B cell (primary cell): ENCODE measurements at regions of chr6 and their contacts with region 1.

Region 1: DNA sequence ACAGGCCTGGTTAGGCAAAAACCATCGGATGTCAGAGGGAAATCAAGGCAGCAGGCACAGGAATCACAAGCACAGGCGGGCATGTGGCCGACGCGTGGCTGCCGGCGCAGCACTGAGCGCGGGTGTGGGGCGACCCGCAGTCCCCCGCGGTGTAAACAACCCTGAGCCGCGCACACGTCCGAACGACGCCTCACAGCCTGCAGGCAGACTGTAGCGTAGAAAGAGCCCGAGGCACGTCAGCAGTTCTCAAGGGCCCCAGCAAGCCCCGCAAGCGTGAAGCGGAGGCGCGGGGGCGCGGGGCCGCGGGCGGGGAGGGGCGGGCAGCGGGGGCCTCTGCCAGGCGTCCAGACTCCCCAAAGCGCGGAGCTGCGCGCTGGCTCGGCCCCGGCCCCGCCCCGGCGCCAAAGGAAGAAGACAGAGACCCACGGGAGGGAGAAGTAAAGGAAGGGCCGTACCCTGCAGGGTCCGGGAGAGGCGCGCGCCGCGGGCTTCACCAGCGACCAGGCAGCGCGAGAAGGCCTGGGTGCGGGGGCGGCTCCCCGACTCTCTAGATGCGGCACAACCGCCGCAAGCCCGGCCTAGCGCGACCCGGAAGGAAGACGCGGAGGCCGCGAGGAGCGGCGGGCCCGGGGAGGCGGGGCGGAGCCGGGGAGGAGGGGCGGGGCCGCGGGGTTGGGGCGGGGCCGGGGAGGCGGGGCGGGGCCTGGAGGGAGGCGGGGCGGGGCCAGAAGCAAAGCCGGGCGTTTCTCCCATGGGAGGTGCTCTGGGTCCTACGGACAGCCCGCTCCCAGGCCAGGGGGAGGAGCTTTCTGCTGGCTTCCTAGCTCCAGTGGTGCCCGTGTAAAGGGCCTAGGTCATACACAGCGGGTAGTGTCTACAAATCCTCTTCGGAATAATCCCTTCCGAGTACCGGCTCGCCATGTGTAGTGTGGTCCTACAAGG is at the start of gene FBXL4:
- DNase-seq: peak; percentile 88
- ATAC-seq: peak; percentile 83
- H3K4me3 ChIP-seq: peak within 1 kb of the TSS; percentile 72 to 93 (median 76)
- H3K4me3 Mint-ChIP-seq: peak within 1 kb of the TSS; percentile 91
- H3K27ac ChIP-seq: peak within 1 kb of the TSS; percentile 71 to 79
- H3K27ac Mint-ChIP-seq: peak within 1 kb of the TSS; percentile 93
- H3K4me1 ChIP-seq: peaks cover 26 to 27% of the 10 kb centered on the region in 2 donors
- H3K4me1 Mint-ChIP-seq: peaks cover 30% of the 10 kb centered on the region
- H3K27me3 ChIP-seq: no peaks in the 10 kb centered on the region
- H3K27me3 Mint-ChIP-seq: peaks cover 3% of the 10 kb centered on the region
- CTCF ChIP-seq: no peak
- total RNA-seq, gene FBXL4: 22.0 and 22.5 TPM in 2 replicates

Region 2: DNA sequence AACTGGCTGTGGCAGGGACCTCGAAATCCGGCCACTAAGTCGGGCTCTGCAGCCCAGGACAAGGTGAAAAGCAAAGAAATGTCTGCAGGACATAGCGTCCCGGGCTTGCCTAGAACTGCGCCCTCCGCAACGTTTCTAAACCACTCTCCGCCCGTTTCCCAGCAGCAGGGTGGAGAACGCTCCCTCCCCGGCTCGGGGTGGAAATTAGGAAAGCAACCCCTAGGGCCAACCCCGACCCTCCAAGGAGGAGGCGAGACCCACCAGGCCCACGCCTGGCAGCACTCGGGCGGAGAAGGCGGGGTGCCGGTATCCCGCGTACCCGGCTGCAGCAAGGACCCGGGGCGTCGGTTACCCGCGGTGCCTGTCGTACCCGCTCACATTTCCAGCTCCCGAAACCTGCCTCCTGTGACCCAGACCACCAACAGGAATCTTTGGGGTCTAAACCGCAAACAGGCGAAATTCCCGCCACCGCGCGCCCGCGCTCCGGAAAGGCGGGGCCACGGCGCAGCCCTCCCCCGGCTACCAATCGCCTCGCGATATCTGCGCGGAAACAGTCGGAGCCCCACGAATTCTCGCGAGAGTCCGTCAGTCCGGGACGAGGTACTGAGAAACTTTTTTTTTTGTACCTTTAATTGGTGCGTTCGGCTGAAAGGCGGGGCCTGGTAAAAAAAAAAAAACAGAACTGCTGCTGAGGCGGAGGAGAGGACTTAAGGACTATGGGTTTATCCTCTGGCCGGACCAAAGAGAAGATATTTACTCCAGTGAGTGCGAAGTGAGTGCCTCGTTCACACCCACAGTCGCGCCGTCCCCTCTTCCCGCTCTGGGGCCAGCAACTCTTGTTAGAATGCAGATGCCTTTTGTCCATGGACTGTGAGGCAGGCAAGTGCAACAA is 1664.7 kb before region 1 on chr6 and contains the start of gene MMS22L:
- CTCF ChIA-PET with region 1: no interaction called
- POLR2A ChIA-PET with region 1: no interaction called
- intact Hi-C with region 1: loop called (anchors 5 kb)
- DNase-seq: peak; percentile 95
- ATAC-seq: peak; percentile 98
- H3K4me3 ChIP-seq: peak within 1 kb of the TSS; percentile 68 to 93 (median 88)
- H3K4me3 Mint-ChIP-seq: peak within 1 kb of the TSS; percentile 97
- H3K27ac ChIP-seq: peak within 1 kb of the TSS; percentile 40 to 44
- H3K27ac Mint-ChIP-seq: peak within 1 kb of the TSS; percentile 91
- H3K4me1 ChIP-seq: peaks cover 9 to 10% of the 10 kb centered on the region in 2 donors
- H3K4me1 Mint-ChIP-seq: peaks cover 21% of the 10 kb centered on the region
- H3K27me3 ChIP-seq: no peaks in the 10 kb centered on the region
- H3K27me3 Mint-ChIP-seq: no peaks in the 10 kb centered on the region
- CTCF ChIP-seq: no peak
- total RNA-seq, gene MMS22L: 20.5 and 23.5 TPM in 2 replicates

Region 3: DNA sequence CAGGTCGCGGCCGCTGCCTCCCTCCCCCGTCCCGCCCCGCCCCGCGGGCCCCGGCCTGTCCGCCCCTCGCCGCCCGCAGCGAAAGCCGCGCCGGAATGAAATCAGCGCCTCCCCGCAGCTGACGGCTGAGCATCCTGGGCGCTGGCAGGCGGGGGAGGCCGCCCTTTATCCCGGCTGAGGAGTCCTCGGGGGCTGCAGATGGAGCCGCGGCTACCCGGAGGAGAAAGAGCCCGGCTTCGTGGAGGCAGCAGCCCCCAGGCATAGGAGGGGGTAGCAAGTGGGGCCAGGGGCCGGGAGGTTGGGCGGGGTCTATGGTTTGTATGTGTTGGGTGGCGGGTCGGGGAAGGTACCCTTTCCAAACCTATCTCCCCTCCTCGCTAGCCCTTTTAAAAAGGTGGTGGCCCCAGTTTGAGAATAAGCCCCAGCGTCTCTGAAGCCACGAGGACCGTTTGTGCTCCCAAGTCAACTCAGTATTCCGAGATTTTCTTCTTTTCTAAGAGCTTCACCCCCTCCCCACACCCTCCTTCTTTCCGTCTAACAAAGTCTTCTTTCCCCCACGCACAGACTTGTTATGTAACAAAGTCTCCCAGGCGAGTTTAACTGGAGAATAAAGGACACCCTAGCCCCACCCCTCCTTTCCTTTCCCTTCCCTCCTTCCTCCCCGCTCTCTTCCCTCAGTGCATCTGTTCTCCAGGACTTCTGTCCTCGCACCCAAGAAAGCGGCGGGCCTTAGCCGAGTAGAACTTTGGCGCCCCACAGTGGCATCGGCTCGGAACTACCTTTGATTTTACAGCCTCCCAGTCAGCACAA is 102.2 kb before region 1 on chr6:
- CTCF ChIA-PET with region 1: no interaction called
- POLR2A ChIA-PET with region 1: no interaction called
- intact Hi-C with region 1: loop called (anchors 5 kb)
- DNase-seq: peak; percentile 78
- ATAC-seq: peak; percentile 72
- H3K4me3 ChIP-seq: peak overlapping the region in 3 of 5 experiments; percentile 9 to 27 (median 24)
- H3K4me3 Mint-ChIP-seq: peak overlapping the region; percentile 78
- H3K27ac ChIP-seq: no peak overlapping the region
- H3K27ac Mint-ChIP-seq: no peak overlapping the region
- H3K4me1 ChIP-seq: peaks cover 39 to 57% of the 10 kb centered on the region in 2 donors
- H3K4me1 Mint-ChIP-seq: peaks cover 33% of the 10 kb centered on the region
- H3K27me3 ChIP-seq: peaks cover 0 to 87% (median 76%) of the 10 kb centered on the region in 4 experiments
- H3K27me3 Mint-ChIP-seq: peaks cover 73% of the 10 kb centered on the region
- CTCF ChIP-seq: peak; percentile 89

Region 4: DNA sequence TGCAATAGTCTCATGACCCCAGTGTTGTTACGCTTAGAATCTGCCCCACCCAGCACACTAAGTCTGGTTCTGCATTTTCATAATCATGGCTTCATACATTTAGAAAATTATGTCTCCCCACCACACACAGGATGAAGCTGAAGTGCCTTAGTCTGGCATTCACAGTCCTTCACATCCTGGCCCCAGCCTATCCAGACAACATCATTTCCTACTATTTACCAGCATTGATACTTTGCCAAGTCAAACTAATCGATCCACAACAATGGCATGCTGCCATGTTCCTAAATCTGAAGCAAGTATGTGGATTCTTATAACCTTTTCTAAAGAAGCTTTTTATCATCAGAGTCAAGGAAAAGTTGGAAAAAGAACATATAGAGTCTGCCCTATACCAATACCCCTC is 132.6 kb after region 1 on chr6:
- CTCF ChIA-PET with region 1: no interaction called
- POLR2A ChIA-PET with region 1: no interaction called
- intact Hi-C with region 1: no loop called
- DNase-seq: no peak
- ATAC-seq: no peak
- H3K4me3 ChIP-seq: no peak overlapping the region
- H3K4me3 Mint-ChIP-seq: no peak overlapping the region
- H3K27ac ChIP-seq: no peak overlapping the region
- H3K27ac Mint-ChIP-seq: no peak overlapping the region
- H3K4me1 ChIP-seq: no peaks in the 10 kb centered on the region
- H3K4me1 Mint-ChIP-seq: no peaks in the 10 kb centered on the region
- H3K27me3 ChIP-seq: peaks cover 0 to 5% (median 0%) of the 10 kb centered on the region in 4 experiments
- H3K27me3 Mint-ChIP-seq: peaks cover 13% of the 10 kb centered on the region
- CTCF ChIP-seq: no peak

Region 5: GRCh38 chr6:99425647-99426453 is 478.2 kb after region 1 on chr6:
- CTCF ChIA-PET with region 1: no interaction called
- POLR2A ChIA-PET with region 1: no interaction called
- intact Hi-C with region 1: loop called (anchors 5 kb)
- DNase-seq: no peak
- ATAC-seq: peak; percentile 50
- H3K4me3 ChIP-seq: peak overlapping the region; percentile 75 to 100 (median 99)
- H3K4me3 Mint-ChIP-seq: peak overlapping the region; percentile 99
- H3K27ac ChIP-seq: peak overlapping the region; percentile 97 to 100
- H3K27ac Mint-ChIP-seq: peak overlapping the region; percentile 100
- H3K4me1 ChIP-seq: peaks cover 42 to 43% of the 10 kb centered on the region in 2 donors
- H3K4me1 Mint-ChIP-seq: peaks cover 54% of the 10 kb centered on the region
- H3K27me3 ChIP-seq: no peaks in the 10 kb centered on the region
- H3K27me3 Mint-ChIP-seq: no peaks in the 10 kb centered on the region
- CTCF ChIP-seq: peak; percentile 5

Region 6: DNA sequence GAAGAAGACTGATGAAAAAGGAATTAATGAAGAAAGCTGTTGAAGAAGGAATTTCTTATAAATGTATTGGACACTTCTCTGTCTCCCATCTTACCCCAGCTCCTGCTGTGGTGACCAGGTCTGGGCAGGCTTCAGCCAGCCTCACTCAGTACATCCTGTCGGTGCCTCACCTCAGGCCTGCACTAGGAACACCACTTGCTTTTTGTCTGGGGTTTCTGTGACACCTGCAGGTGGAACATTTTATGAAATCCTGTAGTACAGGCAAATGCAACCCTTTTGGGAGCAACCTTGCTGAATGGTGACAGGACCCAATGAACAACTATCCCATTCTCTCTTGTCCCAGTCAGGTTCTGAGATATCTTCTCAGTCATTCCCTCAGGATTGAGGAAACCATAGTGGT is 788.7 kb after region 1 on chr6:
- CTCF ChIA-PET with region 1: no interaction called
- POLR2A ChIA-PET with region 1: no interaction called
- intact Hi-C with region 1: no loop called
- DNase-seq: no peak
- ATAC-seq: no peak
- H3K4me3 ChIP-seq: no peak overlapping the region
- H3K4me3 Mint-ChIP-seq: no peak overlapping the region
- H3K27ac ChIP-seq: no peak overlapping the region
- H3K27ac Mint-ChIP-seq: no peak overlapping the region
- H3K4me1 ChIP-seq: no peaks in the 10 kb centered on the region
- H3K4me1 Mint-ChIP-seq: no peaks in the 10 kb centered on the region
- H3K27me3 ChIP-seq: peaks cover 0 to 18% (median 17%) of the 10 kb centered on the region in 4 experiments
- H3K27me3 Mint-ChIP-seq: peaks cover 39% of the 10 kb centered on the region
- CTCF ChIP-seq: no peak

Region 7: GRCh38 chr6:100880853-100881706 is 1933.5 kb after region 1 on chr6 and contains the start of gene ASCC3:
- CTCF ChIA-PET with region 1: no interaction called
- POLR2A ChIA-PET with region 1: no interaction called
- intact Hi-C with region 1: loop called (anchors 5 kb)
- DNase-seq: peak; percentile 91
- ATAC-seq: peak; percentile 97
- H3K4me3 ChIP-seq: peak within 1 kb of the TSS; percentile 68 to 90 (median 83)
- H3K4me3 Mint-ChIP-seq: peak within 1 kb of the TSS; percentile 100
- H3K27ac ChIP-seq: peak within 1 kb of the TSS; percentile 87 to 93
- H3K27ac Mint-ChIP-seq: peak within 1 kb of the TSS; percentile 98
- H3K4me1 ChIP-seq: peaks cover 17 to 19% of the 10 kb centered on the region in 2 donors
- H3K4me1 Mint-ChIP-seq: peaks cover 43% of the 10 kb centered on the region
- H3K27me3 ChIP-seq: no peaks in the 10 kb centered on the region
- H3K27me3 Mint-ChIP-seq: no peaks in the 10 kb centered on the region
- CTCF ChIP-seq: no peak
- total RNA-seq, gene ASCC3: 39.9 and 42.3 TPM in 2 replicates